ENCODE measurements at regions of chr1 and their contacts with region 1.

Region 1: DNA sequence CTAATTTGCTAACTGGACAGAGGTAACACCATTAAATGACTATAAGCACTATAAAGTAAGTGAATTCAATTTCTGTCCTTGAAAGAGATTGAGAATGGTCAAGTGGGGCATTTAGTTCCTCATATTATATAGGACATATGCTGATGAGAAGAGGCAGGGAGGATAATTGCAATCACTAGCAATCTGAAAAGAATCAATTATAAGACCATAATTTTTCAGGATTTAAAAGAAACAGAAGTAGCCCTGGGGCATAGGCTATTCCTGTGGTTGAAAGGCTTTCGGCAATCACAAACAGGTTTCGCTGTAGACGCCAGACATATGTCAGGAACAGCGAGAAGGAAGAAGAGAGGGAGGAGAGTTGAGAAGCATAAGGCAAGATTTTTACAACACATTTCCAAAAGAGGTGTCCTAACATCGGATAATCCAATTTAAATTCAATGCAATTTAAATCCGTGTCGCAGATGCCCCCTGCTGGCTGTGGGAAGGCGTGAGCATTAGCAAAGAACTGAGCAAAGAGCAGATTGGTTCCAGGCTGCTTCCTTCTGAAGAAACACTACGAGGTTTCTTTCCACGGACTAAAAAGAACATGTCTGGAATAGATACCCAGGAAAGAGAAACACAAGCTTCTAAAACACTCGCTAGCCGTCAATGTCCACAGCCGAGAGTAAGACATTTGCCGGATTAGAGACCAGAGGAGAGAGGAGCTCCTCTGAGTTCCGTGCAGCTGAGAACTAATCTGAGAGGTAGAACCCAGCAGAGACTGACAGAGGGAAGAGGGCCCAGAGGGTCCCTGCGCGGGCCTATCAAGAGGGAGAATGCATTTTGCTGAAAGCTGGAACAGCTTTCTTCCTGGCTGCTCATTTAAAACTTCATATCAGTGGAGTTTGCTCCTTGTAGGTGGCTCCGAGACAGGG is 27.9 kb downstream of the RGS5 start:
- DNase-seq: peak; percentile 53
- ATAC-seq: peak; percentile 36
- H3K4me3 Mint-ChIP-seq: no peak overlapping the region
- H3K27ac Mint-ChIP-seq: no peak overlapping the region
- H3K4me1 Mint-ChIP-seq: no peaks in the 10 kb centered on the region
- H3K27me3 Mint-ChIP-seq: no peaks in the 10 kb centered on the region

Region 2: DNA sequence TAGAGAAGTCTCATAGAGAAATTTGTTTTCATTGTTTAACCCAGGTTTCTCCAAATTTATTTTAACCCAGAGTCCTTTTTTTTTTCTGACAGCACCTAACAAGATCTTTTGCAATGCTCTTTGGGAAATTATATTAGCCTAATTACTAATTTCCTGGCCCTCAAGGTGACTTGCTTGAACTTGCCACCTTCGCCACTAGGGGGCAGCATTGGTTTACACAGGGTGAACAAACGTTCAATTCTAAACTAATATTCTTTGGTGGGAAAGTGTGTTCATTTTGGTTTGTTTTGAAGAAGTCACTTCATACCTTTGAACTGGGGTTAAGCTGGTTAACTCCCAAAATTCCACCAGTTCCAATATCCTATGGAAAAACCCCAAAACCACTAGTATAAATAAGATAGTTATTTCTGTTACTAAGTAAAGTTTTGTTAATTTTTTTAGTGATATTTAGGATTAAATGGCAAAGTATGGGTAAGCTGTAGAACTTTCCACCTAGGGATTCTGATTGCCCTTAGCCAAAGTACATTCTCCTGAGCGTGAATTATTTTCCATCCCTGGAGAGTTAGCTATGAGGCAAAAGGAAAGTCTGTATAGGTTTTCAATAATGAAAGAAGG is 326.8 kb before region 1 on chr1:
- CTCF ChIA-PET with region 1: interaction called, 13 read pairs
- POLR2A ChIA-PET with region 1: no interaction called
- DNase-seq: peak; percentile 86
- ATAC-seq: no peak
- H3K4me3 Mint-ChIP-seq: no peak overlapping the region
- H3K27ac Mint-ChIP-seq: no peak overlapping the region
- H3K4me1 Mint-ChIP-seq: no peaks in the 10 kb centered on the region
- H3K27me3 Mint-ChIP-seq: peaks cover 14% of the 10 kb centered on the region

Region 3: DNA sequence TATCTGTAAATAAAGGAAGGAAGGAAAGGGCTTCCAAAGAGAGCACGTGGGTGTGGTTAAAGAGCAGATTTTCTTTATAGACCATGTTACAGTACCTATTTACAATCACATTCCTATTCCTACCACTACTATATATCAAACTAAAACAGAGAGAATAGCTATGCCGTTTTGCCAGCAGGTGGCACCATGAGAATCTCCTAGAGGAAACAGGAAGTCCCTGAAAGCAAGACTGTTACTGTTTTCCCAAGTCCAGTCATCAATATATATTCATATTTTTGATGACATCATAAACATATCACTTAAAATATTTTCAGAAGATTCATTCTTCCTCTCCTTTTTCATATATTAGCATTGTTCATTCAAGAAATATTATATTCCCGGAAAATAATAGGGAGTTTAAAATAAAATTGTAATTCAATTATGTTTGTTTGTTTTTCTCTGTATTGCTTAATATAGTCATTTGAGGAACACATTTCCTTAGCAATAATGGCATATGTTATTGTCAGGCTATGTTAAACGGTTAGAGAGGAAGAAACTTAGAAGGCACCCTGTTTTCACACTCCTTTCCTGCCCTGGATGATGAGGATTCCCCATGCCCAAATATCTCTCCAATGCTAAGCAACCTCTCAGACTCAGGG is 320.4 kb before region 1 on chr1:
- CTCF ChIA-PET with region 1: interaction called, 20 read pairs
- POLR2A ChIA-PET with region 1: no interaction called
- DNase-seq: peak; percentile 68
- ATAC-seq: peak; percentile 53
- H3K4me3 Mint-ChIP-seq: no peak overlapping the region
- H3K27ac Mint-ChIP-seq: no peak overlapping the region
- H3K4me1 Mint-ChIP-seq: no peaks in the 10 kb centered on the region
- H3K27me3 Mint-ChIP-seq: peaks cover 7% of the 10 kb centered on the region

Measured in activated CD8-positive, alpha-beta T cell treated with anti-CD3 and anti-CD28 coated beads, Interleukin-2, amount 10 ng/mL, durations not matched to agents 7 days and 5 days (primary cell).